B cell (primary cell): ENCODE measurements at regions of chr1 and their contacts with region 1.

Region 1: DNA sequence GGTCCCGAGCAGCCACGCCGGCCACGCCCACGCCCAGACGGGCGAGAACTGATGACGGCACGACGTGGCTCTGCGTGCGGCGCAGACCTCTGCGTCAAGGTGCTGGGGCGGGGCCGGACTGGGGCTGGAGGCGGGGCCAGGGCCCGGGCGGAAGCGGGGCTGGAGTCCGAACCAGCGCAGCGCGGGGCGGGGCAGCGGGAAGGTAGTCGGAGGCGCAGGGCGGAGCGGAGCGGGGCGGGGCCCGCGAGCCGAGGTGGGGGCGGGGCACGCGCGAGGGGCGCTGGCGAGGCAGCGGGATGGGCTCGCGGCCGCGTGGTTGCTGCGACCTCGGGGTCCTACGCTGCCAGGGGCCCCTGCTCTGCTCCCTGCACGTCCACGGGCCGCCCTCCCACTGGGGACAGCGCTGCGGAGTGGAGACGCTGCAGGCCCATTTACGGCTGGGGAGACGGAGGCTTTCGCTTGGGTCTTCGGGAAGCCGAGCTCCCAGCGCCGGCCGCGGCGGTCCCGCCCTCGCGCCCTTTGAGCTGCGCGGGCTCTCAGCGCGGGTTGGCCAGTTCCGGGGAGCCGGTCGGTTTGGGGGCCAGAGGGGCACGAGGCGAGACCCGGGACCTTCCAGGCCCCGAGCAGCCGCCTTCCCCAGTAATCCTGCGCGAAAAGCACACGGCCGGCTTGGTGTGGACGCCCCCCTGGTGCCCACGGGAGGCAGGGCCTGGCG is at the start of gene PEX10:
- DNase-seq: peak; percentile 98
- ATAC-seq: peak; percentile 94
- H3K4me3 ChIP-seq: peak within 1 kb of the TSS; percentile 19 to 78 (median 69)
- H3K4me3 Mint-ChIP-seq: peak within 1 kb of the TSS; percentile 89
- H3K27ac ChIP-seq: peak within 1 kb of the TSS; percentile 52 to 90
- H3K27ac Mint-ChIP-seq: peak within 1 kb of the TSS; percentile 92
- H3K4me1 ChIP-seq: peaks cover 45 to 51% of the 10 kb centered on the region in 2 donors
- H3K4me1 Mint-ChIP-seq: peaks cover 43% of the 10 kb centered on the region
- H3K27me3 ChIP-seq: no peaks in the 10 kb centered on the region
- H3K27me3 Mint-ChIP-seq: no peaks in the 10 kb centered on the region
- CTCF ChIP-seq: no peak
- total RNA-seq, gene PEX10: 16.5 and 18.4 TPM in 2 replicates

Region 2: DNA sequence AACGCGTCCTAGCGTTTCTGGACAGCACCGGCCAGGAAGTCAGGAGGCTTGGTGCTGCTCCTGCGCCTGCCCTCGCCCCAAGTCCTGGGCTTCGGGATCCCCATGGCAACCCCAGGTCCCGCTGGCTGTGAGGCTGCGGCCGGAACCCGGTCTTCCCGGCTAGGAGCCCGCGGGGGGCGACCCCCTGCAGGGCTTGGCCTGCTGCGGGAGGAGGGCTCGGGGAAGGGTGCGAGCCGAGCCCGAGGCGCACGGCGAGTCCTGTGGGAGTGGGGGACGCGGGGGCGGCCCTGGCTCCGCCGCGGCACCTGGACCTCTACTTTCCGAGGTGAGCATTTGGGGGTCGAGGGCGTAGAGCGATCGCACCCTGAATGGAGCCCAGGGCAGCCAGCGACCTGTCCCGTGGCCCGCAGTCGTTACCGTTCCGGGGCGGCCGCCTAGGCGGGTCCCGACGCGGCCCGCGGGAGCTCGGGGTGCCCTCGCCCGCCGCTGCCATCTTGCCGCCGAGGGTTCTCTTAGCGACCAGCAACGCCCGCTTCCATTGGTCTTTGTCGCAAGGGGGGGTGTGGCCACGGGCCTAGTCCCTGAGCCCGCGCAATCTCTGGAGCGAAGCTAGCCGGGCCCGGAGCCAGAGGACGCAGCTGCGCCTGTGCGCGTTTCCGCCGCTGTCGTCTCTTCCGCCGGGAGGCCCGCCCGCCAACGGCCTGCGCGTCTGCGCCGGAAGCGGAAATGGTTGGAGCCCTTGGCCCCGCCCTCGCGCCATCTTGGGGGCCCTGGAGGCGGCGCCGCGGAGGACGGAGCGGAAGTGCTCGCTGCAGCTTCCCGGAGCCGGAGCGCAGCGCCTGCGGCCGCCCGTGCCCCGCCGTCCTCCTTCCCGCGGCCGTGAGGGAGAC is 21.4 kb before region 1 on chr1 and contains the starts of genes MORN1 and RER1:
- CTCF ChIA-PET with region 1: no interaction called
- POLR2A ChIA-PET with region 1: interaction called, 4 read pairs
- intact Hi-C with region 1: loop called (anchors 1 kb)
- DNase-seq: peak; percentile 99
- ATAC-seq: peak; percentile 94
- H3K4me3 ChIP-seq: peak within 1 kb of the TSS; percentile 61 to 92 (median 76)
- H3K4me3 Mint-ChIP-seq: peak within 1 kb of the TSS; percentile 92
- H3K27ac ChIP-seq: peak within 1 kb of the TSS; percentile 24 to 88
- H3K27ac Mint-ChIP-seq: peak within 1 kb of the TSS; percentile 88
- H3K4me1 ChIP-seq: peaks cover 25 to 47% of the 10 kb centered on the region in 2 donors
- H3K4me1 Mint-ChIP-seq: peaks cover 47% of the 10 kb centered on the region
- H3K27me3 ChIP-seq: no peaks in the 10 kb centered on the region
- H3K27me3 Mint-ChIP-seq: no peaks in the 10 kb centered on the region
- CTCF ChIP-seq: no peak
- total RNA-seq, gene MORN1: 30.4 and 32.6 TPM in 2 replicates
- total RNA-seq, gene RER1: 117 and 118 TPM in 2 replicates

Region 3: GRCh38 chr1:2438038-2438437 is 25.4 kb after region 1 on chr1:
- CTCF ChIA-PET with region 1: no interaction called
- POLR2A ChIA-PET with region 1: no interaction called
- intact Hi-C with region 1: no loop called
- DNase-seq: no peak
- ATAC-seq: no peak
- H3K4me3 ChIP-seq: no peak overlapping the region
- H3K4me3 Mint-ChIP-seq: no peak overlapping the region
- H3K27ac ChIP-seq: no peak overlapping the region
- H3K27ac Mint-ChIP-seq: no peak overlapping the region
- H3K4me1 ChIP-seq: peaks cover 0 to 2% of the 10 kb centered on the region in 2 donors
- H3K4me1 Mint-ChIP-seq: no peaks in the 10 kb centered on the region
- H3K27me3 ChIP-seq: peaks cover 0 to 15% (median 5%) of the 10 kb centered on the region in 4 experiments
- H3K27me3 Mint-ChIP-seq: no peaks in the 10 kb centered on the region
- CTCF ChIP-seq: no peak

Region 4: GRCh38 chr1:2525920-2526823 is 113.5 kb after region 1 on chr1 and contains the start of gene PANK4:
- CTCF ChIA-PET with region 1: interaction called, 5 read pairs
- POLR2A ChIA-PET with region 1: interaction called, 5 read pairs
- intact Hi-C with region 1: loop called (anchors 1 kb)
- DNase-seq: peak; percentile 94
- ATAC-seq: peak; percentile 91
- H3K4me3 ChIP-seq: peak within 1 kb of the TSS; percentile 48 to 96 (median 74)
- H3K4me3 Mint-ChIP-seq: peak within 1 kb of the TSS; percentile 96
- H3K27ac ChIP-seq: peak within 1 kb of the TSS; percentile 41 to 78
- H3K27ac Mint-ChIP-seq: peak within 1 kb of the TSS; percentile 85
- H3K4me1 ChIP-seq: peaks cover 41 to 53% of the 10 kb centered on the region in 2 donors
- H3K4me1 Mint-ChIP-seq: peaks cover 43% of the 10 kb centered on the region
- H3K27me3 ChIP-seq: peaks cover 0 to 24% (median 10%) of the 10 kb centered on the region in 4 experiments
- H3K27me3 Mint-ChIP-seq: no peaks in the 10 kb centered on the region
- CTCF ChIP-seq: no peak
- total RNA-seq, gene PANK4: 80.5 and 86.3 TPM in 2 replicates

Region 5: DNA sequence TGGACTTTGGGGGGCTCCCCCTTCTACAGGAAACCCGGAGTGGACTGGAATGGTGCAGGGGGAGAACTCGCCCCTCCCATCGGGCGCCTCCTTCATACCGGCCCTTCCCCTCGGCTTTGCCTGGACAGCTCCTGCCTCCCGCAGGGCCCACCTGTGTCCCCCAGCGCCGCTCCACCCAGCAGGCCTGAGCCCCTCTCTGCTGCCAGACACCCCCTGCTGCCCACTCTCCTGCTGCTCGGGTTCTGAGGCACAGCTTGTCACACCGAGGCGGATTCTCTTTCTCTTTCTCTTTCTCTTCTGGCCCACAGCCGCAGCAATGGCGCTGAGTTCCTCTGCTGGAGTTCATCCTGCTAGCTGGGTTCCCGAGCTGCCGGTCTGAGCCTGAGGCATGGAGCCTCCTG is 143.6 kb after region 1 on chr1 and contains the start of gene TNFRSF14:
- CTCF ChIA-PET with region 1: interaction called, 15 read pairs
- POLR2A ChIA-PET with region 1: interaction called, 3 read pairs
- intact Hi-C with region 1: no loop called
- DNase-seq: peak; percentile 88
- ATAC-seq: peak; percentile 61
- H3K4me3 ChIP-seq: peak within 1 kb of the TSS; percentile 82 to 91 (median 85)
- H3K4me3 Mint-ChIP-seq: peak within 1 kb of the TSS; percentile 95
- H3K27ac ChIP-seq: peak within 1 kb of the TSS; percentile 87 to 99
- H3K27ac Mint-ChIP-seq: peak within 1 kb of the TSS; percentile 97
- H3K4me1 ChIP-seq: peaks cover 31 to 43% of the 10 kb centered on the region in 2 donors
- H3K4me1 Mint-ChIP-seq: peaks cover 48% of the 10 kb centered on the region
- H3K27me3 ChIP-seq: no peaks in the 10 kb centered on the region
- H3K27me3 Mint-ChIP-seq: no peaks in the 10 kb centered on the region
- CTCF ChIP-seq: peak; percentile 36
- total RNA-seq, gene TNFRSF14: 239 and 243 TPM in 2 replicates

Region 6: GRCh38 chr1:2642560-2643413 is 230.1 kb after region 1 on chr1:
- CTCF ChIA-PET with region 1: interaction called, 3 read pairs
- POLR2A ChIA-PET with region 1: no interaction called
- intact Hi-C with region 1: loop called (anchors 1 kb)
- DNase-seq: peak; percentile 95
- ATAC-seq: peak; percentile 77
- H3K4me3 ChIP-seq: peak overlapping the region; percentile 38 to 91 (median 83)
- H3K4me3 Mint-ChIP-seq: peak overlapping the region; percentile 91
- H3K27ac ChIP-seq: peak overlapping the region; percentile 81 to 97
- H3K27ac Mint-ChIP-seq: peak overlapping the region; percentile 86
- H3K4me1 ChIP-seq: peaks cover 13 to 17% of the 10 kb centered on the region in 2 donors
- H3K4me1 Mint-ChIP-seq: peaks cover 12% of the 10 kb centered on the region
- H3K27me3 ChIP-seq: no peaks in the 10 kb centered on the region
- H3K27me3 Mint-ChIP-seq: no peaks in the 10 kb centered on the region
- CTCF ChIP-seq: no peak

Region 7: GRCh38 chr1:2786329-2787162 is 373.9 kb after region 1 on chr1:
- CTCF ChIA-PET with region 1: interaction called, 25 read pairs
- POLR2A ChIA-PET with region 1: no interaction called
- intact Hi-C with region 1: no loop called
- DNase-seq: peak; percentile 75
- ATAC-seq: peak; percentile 79
- H3K4me3 ChIP-seq: no peak overlapping the region
- H3K4me3 Mint-ChIP-seq: no peak overlapping the region
- H3K27ac ChIP-seq: no peak overlapping the region
- H3K27ac Mint-ChIP-seq: peak overlapping the region; percentile 56
- H3K4me1 ChIP-seq: peaks cover 0 to 3% of the 10 kb centered on the region in 2 donors
- H3K4me1 Mint-ChIP-seq: peaks cover 1% of the 10 kb centered on the region
- H3K27me3 ChIP-seq: peaks cover 0 to 39% (median 7%) of the 10 kb centered on the region in 4 experiments
- H3K27me3 Mint-ChIP-seq: peaks cover 28% of the 10 kb centered on the region
- CTCF ChIP-seq: peak; percentile 83

Region 8: DNA sequence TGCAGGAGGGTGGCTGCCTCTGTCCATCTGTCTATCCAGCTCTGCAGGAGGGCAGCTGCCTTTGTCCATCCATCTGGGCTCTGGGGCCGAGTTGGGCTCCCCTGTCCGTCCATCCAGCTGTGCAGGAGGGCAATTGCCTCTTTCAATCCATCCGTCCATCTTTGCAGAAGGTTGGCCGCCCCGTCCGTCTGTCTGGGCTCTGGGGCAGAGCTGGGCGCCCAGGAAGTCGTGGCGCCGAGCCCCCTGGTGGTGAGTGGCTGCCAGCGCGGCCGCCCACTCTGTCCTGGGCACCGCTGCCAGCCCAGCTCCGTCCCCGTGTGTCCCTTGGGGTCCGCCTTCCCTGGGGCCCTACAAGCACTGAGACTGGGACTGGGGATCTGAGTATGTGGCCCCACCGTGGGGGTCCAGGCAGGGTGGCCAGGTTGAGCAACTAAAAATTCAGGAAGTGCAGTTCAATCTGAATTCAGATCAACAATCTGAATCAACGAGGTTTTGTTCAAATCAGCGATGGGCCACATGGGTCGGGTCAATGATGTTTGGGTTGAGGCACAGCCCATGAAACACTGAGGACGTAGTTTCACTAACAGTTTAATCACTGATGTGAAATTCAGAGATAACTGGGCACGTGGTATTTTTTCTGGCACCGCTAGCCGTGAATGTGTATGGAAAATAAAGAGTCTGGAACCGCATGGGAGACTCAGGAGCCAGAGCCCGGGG is 509.5 kb after region 1 on chr1:
- CTCF ChIA-PET with region 1: interaction called, 10 read pairs
- POLR2A ChIA-PET with region 1: no interaction called
- intact Hi-C with region 1: no loop called
- DNase-seq: peak; percentile 40
- ATAC-seq: peak; percentile 45
- H3K4me3 ChIP-seq: no peak overlapping the region
- H3K4me3 Mint-ChIP-seq: no peak overlapping the region
- H3K27ac ChIP-seq: no peak overlapping the region
- H3K27ac Mint-ChIP-seq: no peak overlapping the region
- H3K4me1 ChIP-seq: peaks cover 0 to 2% of the 10 kb centered on the region in 2 donors
- H3K4me1 Mint-ChIP-seq: peaks cover 3% of the 10 kb centered on the region
- H3K27me3 ChIP-seq: no peaks in the 10 kb centered on the region
- H3K27me3 Mint-ChIP-seq: no peaks in the 10 kb centered on the region
- CTCF ChIP-seq: peak; percentile 64